ENCODE measurements at regions of chr5 and their contacts with region 1.

Region 1: DNA sequence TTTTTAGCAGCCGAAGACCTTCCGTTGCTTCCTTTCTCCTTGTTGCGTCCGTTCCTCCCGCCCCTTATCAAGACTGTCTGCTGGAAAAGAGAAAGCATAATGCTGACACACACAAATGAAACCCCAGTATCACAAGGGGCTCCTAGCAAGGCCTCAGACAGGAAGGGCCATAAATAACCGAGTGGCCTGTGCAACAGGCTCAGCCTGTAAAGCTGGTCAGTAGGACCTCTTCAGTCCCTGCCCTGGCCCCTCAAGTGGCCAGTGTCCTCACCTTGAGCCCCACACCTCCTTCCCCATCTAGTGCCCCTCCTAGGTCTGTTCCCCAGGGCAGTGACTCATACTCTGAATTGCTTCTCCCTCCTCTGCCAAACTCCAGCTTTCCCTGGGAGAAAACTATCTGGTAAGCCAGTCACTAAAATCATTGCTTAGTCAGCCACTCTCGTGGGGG is 174.6 kb upstream of the IL12B start:
- DNase-seq: peak; percentile 20
- H3K4me3 ChIP-seq: no peak overlapping the region
- H3K27ac ChIP-seq: peak overlapping the region; percentile 69
- H3K27me3 ChIP-seq: no peaks in the 10 kb centered on the region
- CTCF ChIP-seq: no peak

Region 2: DNA sequence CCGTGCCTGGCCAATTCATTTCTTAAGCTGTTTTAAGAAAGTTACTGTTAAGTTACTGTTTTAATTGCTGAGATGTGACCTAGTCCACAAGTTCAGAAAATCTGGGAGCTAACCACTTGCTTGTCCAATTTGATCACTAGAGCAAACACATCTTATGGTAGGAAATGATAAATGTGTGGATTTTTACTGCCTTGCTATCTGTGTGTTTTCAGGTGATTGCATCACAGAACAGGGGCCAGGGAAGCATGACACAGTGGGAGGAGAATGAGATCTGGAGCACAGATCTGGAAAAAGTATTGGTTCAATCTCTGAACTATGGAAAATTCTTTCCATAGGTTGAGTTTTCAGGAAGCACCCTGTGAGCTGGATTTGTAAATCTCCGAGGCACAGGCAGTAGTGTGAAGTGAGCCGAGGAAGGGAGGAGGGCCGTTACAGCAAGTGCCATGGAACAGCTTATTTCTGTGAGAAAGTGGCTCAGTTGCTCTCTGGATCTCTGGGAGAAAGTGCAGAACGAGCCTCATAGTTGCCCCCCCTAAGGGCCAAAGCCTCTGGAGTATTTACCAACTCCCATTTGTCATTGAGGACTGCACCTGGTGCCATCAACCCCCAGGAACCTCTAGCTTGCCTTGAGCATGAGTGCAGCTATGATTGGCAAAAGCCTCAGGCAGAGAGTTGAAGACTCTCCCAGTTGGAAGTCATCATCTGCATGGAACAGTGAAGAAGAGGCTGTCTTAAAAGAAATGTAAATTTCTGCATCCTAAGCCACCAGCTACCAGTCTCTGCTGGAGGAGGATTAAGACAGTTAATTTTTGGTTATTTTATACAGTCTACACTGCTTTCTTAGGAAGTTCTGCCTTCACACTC is 1484.1 kb before region 1 on chr5:
- CTCF ChIA-PET with region 1: interaction called, 11 read pairs
- POLR2A ChIA-PET with region 1: no interaction called
- DNase-seq: no peak
- H3K4me3 ChIP-seq: no peak overlapping the region
- H3K27ac ChIP-seq: no peak overlapping the region
- H3K27me3 ChIP-seq: no peaks in the 10 kb centered on the region
- CTCF ChIP-seq: no peak

Region 3: GRCh38 chr5:159515909-159516415 is 11.1 kb after region 1 on chr5:
- CTCF ChIA-PET with region 1: interaction called, 13 read pairs
- POLR2A ChIA-PET with region 1: no interaction called
- DNase-seq: no peak
- H3K4me3 ChIP-seq: no peak overlapping the region
- H3K27ac ChIP-seq: no peak overlapping the region
- H3K27me3 ChIP-seq: no peaks in the 10 kb centered on the region
- CTCF ChIP-seq: peak; percentile 76

Region 4: GRCh38 chr5:159531554-159532105 is 26.7 kb after region 1 on chr5:
- CTCF ChIA-PET with region 1: no interaction called
- POLR2A ChIA-PET with region 1: no interaction called
- DNase-seq: no peak
- H3K4me3 ChIP-seq: no peak overlapping the region
- H3K27ac ChIP-seq: no peak overlapping the region
- H3K27me3 ChIP-seq: no peaks in the 10 kb centered on the region
- CTCF ChIP-seq: peak; percentile 31